Endothelial cell of umbilical vein (primary cell): ENCODE measurements at regions of chr16 and their contacts with region 1.

Region 1: DNA sequence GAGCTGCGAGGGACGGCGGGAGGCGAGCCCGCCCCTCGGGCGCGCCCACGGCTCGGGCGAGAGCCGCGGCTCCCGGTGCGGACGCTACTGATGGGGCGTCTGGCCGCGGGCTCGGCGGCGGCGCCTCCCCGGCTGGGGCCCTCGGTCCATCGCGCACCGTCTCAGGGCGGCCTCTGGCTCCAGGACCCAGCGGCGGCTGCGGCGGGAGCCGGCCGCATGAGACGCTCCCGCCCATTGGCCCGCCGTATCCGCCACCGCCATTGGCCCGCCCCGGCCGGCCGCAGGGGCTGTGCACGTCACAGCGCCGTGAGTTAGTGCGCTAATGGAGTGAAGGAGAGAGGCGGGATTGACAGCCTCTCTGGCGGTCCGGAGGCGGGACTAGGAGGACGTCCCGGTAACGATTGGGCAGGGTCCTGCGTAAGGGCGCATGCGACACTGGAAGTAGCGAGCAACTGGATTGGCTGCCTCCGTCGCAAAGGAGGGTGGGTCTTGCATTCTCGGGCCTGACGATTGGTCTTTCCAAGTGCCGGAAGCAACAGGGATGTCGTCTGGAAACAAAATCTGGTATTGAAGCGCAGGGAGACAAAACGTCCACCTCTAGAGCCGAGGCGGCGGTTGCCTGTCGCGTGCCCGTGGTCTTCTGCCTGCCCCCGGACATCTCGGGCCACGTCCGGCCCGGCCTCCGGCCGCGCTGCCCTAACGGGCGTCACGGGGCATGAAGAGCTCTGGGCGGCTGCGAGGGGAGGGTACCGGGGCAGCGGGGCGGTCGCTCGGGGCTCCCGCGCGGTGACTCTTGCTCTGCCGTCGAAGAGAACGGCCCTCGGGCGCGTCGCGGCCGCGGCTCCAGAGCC is at the start of gene ANKRD11:
- DNase-seq: peak; percentile 100
- H3K4me3 ChIP-seq: peak within 1 kb of the TSS; percentile 73 to 83 (median 76)
- H3K27ac ChIP-seq: peak within 1 kb of the TSS; percentile 55
- H3K4me1 ChIP-seq: peaks cover 23% of the 10 kb centered on the region
- H3K27me3 ChIP-seq: no peaks in the 10 kb centered on the region
- CTCF ChIP-seq: no peak
- POLR2A ChIP-seq: peak; percentile 75
- total RNA-seq, gene ANKRD11: 184 and 191 TPM in 2 replicates

Region 2: GRCh38 chr16:89319883-89320781 is 170.5 kb before region 1 on chr16:
- CTCF ChIA-PET with region 1: no interaction called
- POLR2A ChIA-PET with region 1: no interaction called
- dilution Hi-C with region 1: no loop called
- intact Hi-C with region 1: loop called (anchors 5 kb)
- DNase-seq: peak; percentile 84
- H3K4me3 ChIP-seq: no peak overlapping the region
- H3K27ac ChIP-seq: peak overlapping the region; percentile 77
- H3K4me1 ChIP-seq: peaks cover 85% of the 10 kb centered on the region
- H3K27me3 ChIP-seq: no peaks in the 10 kb centered on the region
- CTCF ChIP-seq: no peak
- POLR2A ChIP-seq: no peak

Region 3: DNA sequence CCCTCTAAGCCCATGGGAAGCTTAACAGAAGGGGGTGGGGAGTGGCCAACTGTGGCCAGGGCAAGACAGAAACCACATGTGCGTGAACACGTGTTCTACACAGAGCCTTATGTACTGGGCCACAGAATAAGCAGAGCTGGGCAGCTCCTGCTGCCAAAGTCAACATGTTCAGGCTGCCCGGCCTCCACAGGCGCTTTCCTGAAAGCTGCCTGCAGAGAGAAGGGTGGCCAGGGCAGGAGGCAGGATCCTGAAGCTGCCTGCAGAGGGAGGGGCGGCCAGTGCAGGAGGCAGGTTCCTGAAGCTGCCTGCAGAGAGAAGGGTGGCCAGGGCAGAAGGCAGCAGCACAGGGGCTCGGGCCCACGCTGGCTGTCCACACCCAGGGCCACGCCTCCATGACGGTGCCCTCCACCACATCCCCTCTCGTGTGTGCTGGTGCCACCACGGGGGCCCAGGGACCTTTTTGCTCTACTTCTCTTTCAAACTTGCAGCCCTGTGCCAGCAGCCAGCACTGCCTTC is 79.8 kb before region 1 on chr16:
- CTCF ChIA-PET with region 1: interaction called, 12 read pairs
- POLR2A ChIA-PET with region 1: interaction called, 5 read pairs
- dilution Hi-C with region 1: no loop called
- intact Hi-C with region 1: loop called (anchors 2 kb)
- DNase-seq: peak; percentile 97
- H3K4me3 ChIP-seq: no peak overlapping the region
- H3K27ac ChIP-seq: peak overlapping the region; percentile 39
- H3K4me1 ChIP-seq: peaks cover 52% of the 10 kb centered on the region
- H3K27me3 ChIP-seq: no peaks in the 10 kb centered on the region
- CTCF ChIP-seq: peak in 1 of 2 donors; percentile 52
- POLR2A ChIP-seq: peak; percentile 22

Region 4: GRCh38 chr16:89422905-89423630 is 67.5 kb before region 1 on chr16:
- CTCF ChIA-PET with region 1: no interaction called
- POLR2A ChIA-PET with region 1: no interaction called
- dilution Hi-C with region 1: no loop called
- intact Hi-C with region 1: loop called (anchors 2 kb)
- DNase-seq: no peak
- H3K4me3 ChIP-seq: peak overlapping the region in 1 of 3 experiments; percentile 37
- H3K27ac ChIP-seq: peak overlapping the region; percentile 85
- H3K4me1 ChIP-seq: peaks cover 42% of the 10 kb centered on the region
- H3K27me3 ChIP-seq: no peaks in the 10 kb centered on the region
- CTCF ChIP-seq: no peak
- POLR2A ChIP-seq: no peak

Region 5: DNA sequence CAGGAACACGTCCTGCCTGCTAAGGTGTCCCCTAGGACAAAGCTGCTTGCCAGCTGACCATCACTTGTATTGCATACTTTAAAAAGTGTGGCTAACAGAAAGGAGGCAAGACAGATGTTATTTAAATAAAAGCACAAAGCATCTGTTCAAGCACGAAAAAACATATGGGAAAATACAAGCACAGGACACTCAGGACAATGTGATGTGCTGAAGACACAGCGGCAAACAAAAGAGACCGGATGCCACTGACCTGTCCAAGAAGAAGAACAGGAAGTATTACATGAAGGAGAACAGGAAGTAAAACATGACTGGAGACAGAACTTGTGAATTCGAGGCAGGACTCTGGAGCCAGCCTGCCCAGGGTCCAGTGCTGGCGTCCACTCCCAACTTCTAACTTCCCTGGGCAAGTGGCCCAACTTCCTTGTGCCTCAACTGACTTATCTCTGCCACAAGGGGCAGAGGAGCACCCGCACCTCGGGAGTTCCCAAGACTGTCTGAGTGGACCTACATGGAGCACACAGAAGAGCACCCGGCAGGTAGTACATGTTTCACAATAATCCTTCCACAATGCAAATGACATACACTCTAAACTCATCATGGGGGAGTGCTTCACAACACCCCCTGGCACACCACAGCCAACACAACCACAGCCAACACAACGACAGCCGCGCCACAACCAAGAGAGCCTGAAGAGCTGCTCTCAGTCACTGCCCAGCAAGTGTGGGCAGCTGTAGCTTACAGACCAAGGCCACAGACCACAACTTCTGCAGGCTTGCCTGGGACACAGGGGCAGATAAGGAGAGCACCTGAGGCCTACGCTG is 36.9 kb before region 1 on chr16:
- CTCF ChIA-PET with region 1: interaction called, 4 read pairs
- POLR2A ChIA-PET with region 1: no interaction called
- dilution Hi-C with region 1: no loop called
- intact Hi-C with region 1: loop called (anchors 5 kb)
- DNase-seq: peak; percentile 48
- H3K4me3 ChIP-seq: no peak overlapping the region
- H3K27ac ChIP-seq: peak overlapping the region; percentile 29
- H3K4me1 ChIP-seq: peaks cover 42% of the 10 kb centered on the region
- H3K27me3 ChIP-seq: no peaks in the 10 kb centered on the region
- CTCF ChIP-seq: peak; percentile 43 to 49
- POLR2A ChIP-seq: no peak

Region 6: DNA sequence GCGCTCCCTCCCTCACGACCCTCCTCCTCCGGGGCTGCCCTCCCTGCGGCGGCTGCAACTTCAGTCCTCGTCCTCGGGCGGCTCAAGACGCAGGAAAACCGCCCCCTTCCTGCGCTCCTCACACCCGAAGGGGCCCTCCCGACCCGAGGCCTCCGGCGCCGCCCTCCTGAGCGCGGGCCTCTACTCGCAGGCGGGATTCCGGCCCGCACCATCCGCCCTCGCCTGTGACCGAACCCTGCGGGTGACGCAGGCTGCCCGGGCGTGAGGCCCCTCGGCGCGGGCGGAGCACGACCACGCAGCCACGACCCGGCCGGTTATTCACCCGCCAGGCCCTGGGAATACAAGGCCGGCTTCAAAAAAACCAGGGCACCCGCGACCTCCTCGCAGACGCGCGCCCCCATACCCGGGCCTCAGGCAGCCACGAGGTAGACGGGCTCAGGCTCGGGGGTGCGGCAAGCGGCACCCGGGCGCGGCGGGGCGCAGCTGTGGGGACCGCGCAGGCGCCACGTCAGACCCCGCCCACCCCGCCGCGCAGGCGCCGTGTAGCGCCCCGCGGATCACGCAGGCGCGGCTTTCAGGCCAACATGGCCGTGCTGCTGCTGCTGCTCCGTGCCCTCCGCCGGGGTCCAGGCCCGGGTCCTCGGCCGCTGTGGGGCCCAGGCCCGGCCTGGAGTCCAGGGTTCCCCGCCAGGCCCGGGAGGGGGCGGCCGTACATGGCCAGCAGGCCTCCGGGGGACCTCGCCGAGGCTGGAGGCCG is 17.4 kb after region 1 on chr16 and contains the start of gene SPG7:
- CTCF ChIA-PET with region 1: interaction called, 11 read pairs
- POLR2A ChIA-PET with region 1: no interaction called
- dilution Hi-C with region 1: no loop called
- intact Hi-C with region 1: loop called (anchors 1 kb)
- DNase-seq: peak; percentile 91
- H3K4me3 ChIP-seq: peak within 1 kb of the TSS; percentile 15 to 80 (median 65)
- H3K27ac ChIP-seq: peak within 1 kb of the TSS; percentile 89
- H3K4me1 ChIP-seq: peaks cover 28% of the 10 kb centered on the region
- H3K27me3 ChIP-seq: no peaks in the 10 kb centered on the region
- CTCF ChIP-seq: no peak
- POLR2A ChIP-seq: peak; percentile 86
- total RNA-seq, gene SPG7: 139 and 146 TPM in 2 replicates

Region 7: GRCh38 chr16:89599451-89599858 is 108.8 kb after region 1 on chr16:
- CTCF ChIA-PET with region 1: no interaction called
- POLR2A ChIA-PET with region 1: no interaction called
- dilution Hi-C with region 1: no loop called
- intact Hi-C with region 1: no loop called
- DNase-seq: no peak
- H3K4me3 ChIP-seq: no peak overlapping the region
- H3K27ac ChIP-seq: no peak overlapping the region
- H3K4me1 ChIP-seq: peaks cover 11% of the 10 kb centered on the region
- H3K27me3 ChIP-seq: no peaks in the 10 kb centered on the region
- CTCF ChIP-seq: peak in 1 of 2 donors; percentile 25
- POLR2A ChIP-seq: no peak